ENCODE measurements at regions of chr12 and their contacts with region 1.

Region 1: DNA sequence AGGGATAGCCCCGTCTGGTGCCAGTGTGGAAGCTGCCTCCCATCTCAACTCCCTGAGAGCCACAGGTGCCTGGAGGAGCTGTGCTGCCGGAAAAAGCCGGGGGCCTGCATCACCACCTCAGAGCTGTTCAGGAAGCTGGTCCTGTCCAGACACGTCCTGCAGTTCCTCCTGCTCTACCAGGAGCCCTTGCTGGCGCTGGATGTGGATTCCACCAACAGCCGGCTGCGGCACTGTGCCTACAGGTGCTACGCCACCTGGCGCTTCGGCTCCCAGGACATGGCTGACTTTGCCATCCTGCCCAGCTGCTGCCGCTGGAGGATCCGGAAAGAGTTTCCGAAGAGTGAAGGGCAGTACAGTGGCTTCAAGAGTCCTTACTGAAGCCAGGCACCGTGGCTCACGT is 25.5 kb upstream of the P2RX4 start:
- DNase-seq: peak; percentile 91
- H3K4me3 ChIP-seq: no peak overlapping the region
- H3K27ac ChIP-seq: no peak overlapping the region
- H3K4me1 ChIP-seq: peaks cover 8% of the 10 kb centered on the region
- H3K27me3 ChIP-seq: no peaks in the 10 kb centered on the region
- CTCF ChIP-seq: peak; percentile 23 to 71

Region 2: GRCh38 chr12:121060149-121061001 is 124.0 kb before region 1 on chr12:
- CTCF ChIA-PET with region 1: no interaction called
- dilution Hi-C with region 1: no loop called
- in situ Hi-C with region 1: no loop called
- intact Hi-C with region 1: no loop called
- DNase-seq: no peak
- H3K4me3 ChIP-seq: peak overlapping the region in 1 of 3 experiments; percentile 15
- H3K27ac ChIP-seq: no peak overlapping the region
- H3K4me1 ChIP-seq: no peaks in the 10 kb centered on the region
- H3K27me3 ChIP-seq: no peaks in the 10 kb centered on the region
- CTCF ChIP-seq: peak; percentile 27 to 45

Region 3: GRCh38 chr12:121089031-121089812 is 95.2 kb before region 1 on chr12:
- CTCF ChIA-PET with region 1: no interaction called
- dilution Hi-C with region 1: no loop called
- in situ Hi-C with region 1: no loop called
- intact Hi-C with region 1: no loop called
- DNase-seq: no peak
- H3K4me3 ChIP-seq: no peak overlapping the region
- H3K27ac ChIP-seq: no peak overlapping the region
- H3K4me1 ChIP-seq: no peaks in the 10 kb centered on the region
- H3K27me3 ChIP-seq: no peaks in the 10 kb centered on the region
- CTCF ChIP-seq: no peak

Region 4: DNA sequence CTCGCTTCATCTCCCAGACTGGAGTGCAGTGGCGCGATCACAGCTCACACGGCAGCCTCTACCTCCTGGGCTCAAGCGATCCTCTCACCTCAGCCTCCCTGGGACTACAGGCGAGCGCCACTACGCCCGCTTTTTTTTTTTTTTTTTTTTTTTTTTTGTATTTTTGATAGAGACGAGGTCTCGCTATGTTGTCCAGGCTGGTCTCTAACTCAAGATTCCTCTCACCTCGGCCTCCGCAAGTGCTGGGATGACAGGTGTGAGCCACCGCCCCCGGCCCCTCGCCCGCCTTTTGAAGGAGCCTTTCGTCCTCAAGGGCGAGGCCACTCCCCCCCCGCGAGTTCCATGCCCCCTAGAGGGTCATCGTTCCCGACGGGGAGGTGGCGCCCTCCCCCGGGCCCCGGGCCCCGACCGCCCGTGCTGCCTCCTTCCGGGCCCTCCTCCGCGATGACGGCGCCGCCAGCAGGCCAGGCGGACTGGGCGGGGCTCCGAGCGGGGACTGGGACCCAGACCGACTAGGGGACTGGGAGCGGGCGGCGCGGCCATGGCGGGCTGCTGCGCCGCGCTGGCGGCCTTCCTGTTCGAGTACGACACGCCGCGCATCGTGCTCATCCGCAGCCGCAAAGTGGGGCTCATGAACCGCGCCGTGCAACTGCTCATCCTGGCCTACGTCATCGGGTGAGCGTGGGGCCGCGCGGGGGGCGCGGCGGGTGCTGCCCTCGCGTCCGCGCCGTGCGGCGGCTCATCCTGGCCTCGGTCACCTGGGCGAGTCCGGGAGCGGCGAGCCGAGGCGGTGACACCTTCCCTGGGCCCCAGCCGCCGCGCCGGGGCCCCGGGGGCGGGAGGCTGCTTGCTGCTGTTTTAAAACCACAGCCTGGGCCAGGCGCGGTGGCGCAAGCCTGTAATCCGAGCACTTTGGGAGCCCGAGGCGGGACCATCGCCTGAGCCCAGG is 25.5 kb after region 1 on chr12 and contains the start of gene P2RX4:
- CTCF ChIA-PET with region 1: no interaction called
- dilution Hi-C with region 1: no loop called
- in situ Hi-C with region 1: no loop called
- intact Hi-C with region 1: loop called (anchors 1 kb)
- DNase-seq: peak; percentile 68
- H3K4me3 ChIP-seq: peak within 1 kb of the TSS; percentile 49 to 72 (median 58)
- H3K27ac ChIP-seq: peak within 1 kb of the TSS; percentile 47
- H3K4me1 ChIP-seq: peaks cover 13% of the 10 kb centered on the region
- H3K27me3 ChIP-seq: no peaks in the 10 kb centered on the region
- CTCF ChIP-seq: no peak
- total RNA-seq, gene P2RX4: 5.0 to 5.4 TPM

Region 5: GRCh38 chr12:121472150-121472905 is 287.9 kb after region 1 on chr12:
- CTCF ChIA-PET with region 1: no interaction called
- dilution Hi-C with region 1: no loop called
- in situ Hi-C with region 1: no loop called
- intact Hi-C with region 1: no loop called
- DNase-seq: no peak
- H3K4me3 ChIP-seq: no peak overlapping the region
- H3K27ac ChIP-seq: no peak overlapping the region
- H3K4me1 ChIP-seq: peaks cover 5% of the 10 kb centered on the region
- H3K27me3 ChIP-seq: no peaks in the 10 kb centered on the region
- CTCF ChIP-seq: no peak

Measured in mammary epithelial cell (primary cell).